Activated CD4-positive, alpha-beta T cell treated with anti-CD3 and anti-CD28 coated beads, Interleukin-2, amount 10 ng/mL, durations not matched to agents 7 days and 5 days (primary cell): ENCODE measurements at regions of chr5 and their contacts with region 1.

Region 1: GRCh38 chr5:43040287-43041098 is at the start of gene ANXA2R:
- DNase-seq: peak; percentile 98
- H3K4me3 Mint-ChIP-seq: peak within 1 kb of the TSS; percentile 94
- H3K27ac Mint-ChIP-seq: peak within 1 kb of the TSS; percentile 99
- H3K4me1 Mint-ChIP-seq: peaks cover 41% of the 10 kb centered on the region
- H3K27me3 Mint-ChIP-seq: no peaks in the 10 kb centered on the region
- total RNA-seq, gene ANXA2R: 29.5 to 32.0 TPM

Region 2: GRCh38 chr5:42531611-42532010 is 508.9 kb before region 1 on chr5:
- CTCF ChIA-PET with region 1: no interaction called
- POLR2A ChIA-PET with region 1: no interaction called
- DNase-seq: no peak
- H3K4me3 Mint-ChIP-seq: no peak overlapping the region
- H3K27ac Mint-ChIP-seq: no peak overlapping the region
- H3K4me1 Mint-ChIP-seq: no peaks in the 10 kb centered on the region
- H3K27me3 Mint-ChIP-seq: peaks cover under 1% of the 10 kb centered on the region

Region 3: GRCh38 chr5:43008369-43009153 is 31.9 kb before region 1 on chr5:
- CTCF ChIA-PET with region 1: interaction called, 14 read pairs
- POLR2A ChIA-PET with region 1: interaction called, 19 read pairs
- DNase-seq: peak; percentile 90
- H3K4me3 Mint-ChIP-seq: peak overlapping the region; percentile 80
- H3K27ac Mint-ChIP-seq: peak overlapping the region; percentile 97
- H3K4me1 Mint-ChIP-seq: peaks cover 44% of the 10 kb centered on the region
- H3K27me3 Mint-ChIP-seq: no peaks in the 10 kb centered on the region

Region 4: GRCh38 chr5:43019614-43020293 is 20.7 kb before region 1 on chr5:
- CTCF ChIA-PET with region 1: interaction called, 70 read pairs
- POLR2A ChIA-PET with region 1: interaction called, 108 read pairs
- DNase-seq: peak; percentile 94
- H3K4me3 Mint-ChIP-seq: peak overlapping the region; percentile 99
- H3K27ac Mint-ChIP-seq: peak overlapping the region; percentile 100
- H3K4me1 Mint-ChIP-seq: peaks cover 40% of the 10 kb centered on the region
- H3K27me3 Mint-ChIP-seq: no peaks in the 10 kb centered on the region

Region 5: GRCh38 chr5:43027054-43027785 is 13.3 kb before region 1 on chr5:
- CTCF ChIA-PET with region 1: interaction called, 70 read pairs
- POLR2A ChIA-PET with region 1: no interaction called
- DNase-seq: no peak
- H3K4me3 Mint-ChIP-seq: no peak overlapping the region
- H3K27ac Mint-ChIP-seq: no peak overlapping the region
- H3K4me1 Mint-ChIP-seq: peaks cover 38% of the 10 kb centered on the region
- H3K27me3 Mint-ChIP-seq: no peaks in the 10 kb centered on the region

Region 6: GRCh38 chr5:43066799-43067741 is 26.6 kb after region 1 on chr5:
- CTCF ChIA-PET with region 1: interaction called, 26 read pairs
- POLR2A ChIA-PET with region 1: interaction called, 38 read pairs
- DNase-seq: peak; percentile 90
- H3K4me3 Mint-ChIP-seq: peak overlapping the region; percentile 97
- H3K27ac Mint-ChIP-seq: peak overlapping the region; percentile 99
- H3K4me1 Mint-ChIP-seq: peaks cover 45% of the 10 kb centered on the region
- H3K27me3 Mint-ChIP-seq: no peaks in the 10 kb centered on the region

Region 7: GRCh38 chr5:43120720-43121564 is 80.4 kb after region 1 on chr5 and contains the start of gene ZNF131:
- CTCF ChIA-PET with region 1: interaction called, 3 read pairs
- POLR2A ChIA-PET with region 1: interaction called, 13 read pairs
- DNase-seq: peak; percentile 96
- H3K4me3 Mint-ChIP-seq: peak within 1 kb of the TSS; percentile 91
- H3K27ac Mint-ChIP-seq: peak within 1 kb of the TSS; percentile 95
- H3K4me1 Mint-ChIP-seq: peaks cover 45% of the 10 kb centered on the region
- H3K27me3 Mint-ChIP-seq: no peaks in the 10 kb centered on the region
- total RNA-seq, gene ZNF131: 48.4 to 50.8 TPM